Naive thymus-derived CD4-positive, alpha-beta T cell (primary cell): ENCODE measurements at regions of chr12 and their contacts with region 1.

Region 1: GRCh38 chr12:8687846-8688601 is 9.8 kb upstream of the RIMKLB start:
- DNase-seq: peak in 4 of 9 donors; percentile 14 to 16 (median 14)
- ATAC-seq: peak; percentile 55
- H3K4me3 ChIP-seq: no peak overlapping the region
- H3K4me3 Mint-ChIP-seq: no peak overlapping the region
- H3K27ac ChIP-seq: no peak overlapping the region
- H3K27ac Mint-ChIP-seq: no peak overlapping the region
- H3K4me1 ChIP-seq: peaks cover 0 to 8% of the 10 kb centered on the region in 2 donors
- H3K4me1 Mint-ChIP-seq: peaks cover 0 to 15% (median 10%) of the 10 kb centered on the region in 7 donors
- H3K27me3 ChIP-seq: no peaks in the 10 kb centered on the region
- H3K27me3 Mint-ChIP-seq: peaks cover 0 to 38% (median 0%) of the 10 kb centered on the region in 5 donors

Region 2: DNA sequence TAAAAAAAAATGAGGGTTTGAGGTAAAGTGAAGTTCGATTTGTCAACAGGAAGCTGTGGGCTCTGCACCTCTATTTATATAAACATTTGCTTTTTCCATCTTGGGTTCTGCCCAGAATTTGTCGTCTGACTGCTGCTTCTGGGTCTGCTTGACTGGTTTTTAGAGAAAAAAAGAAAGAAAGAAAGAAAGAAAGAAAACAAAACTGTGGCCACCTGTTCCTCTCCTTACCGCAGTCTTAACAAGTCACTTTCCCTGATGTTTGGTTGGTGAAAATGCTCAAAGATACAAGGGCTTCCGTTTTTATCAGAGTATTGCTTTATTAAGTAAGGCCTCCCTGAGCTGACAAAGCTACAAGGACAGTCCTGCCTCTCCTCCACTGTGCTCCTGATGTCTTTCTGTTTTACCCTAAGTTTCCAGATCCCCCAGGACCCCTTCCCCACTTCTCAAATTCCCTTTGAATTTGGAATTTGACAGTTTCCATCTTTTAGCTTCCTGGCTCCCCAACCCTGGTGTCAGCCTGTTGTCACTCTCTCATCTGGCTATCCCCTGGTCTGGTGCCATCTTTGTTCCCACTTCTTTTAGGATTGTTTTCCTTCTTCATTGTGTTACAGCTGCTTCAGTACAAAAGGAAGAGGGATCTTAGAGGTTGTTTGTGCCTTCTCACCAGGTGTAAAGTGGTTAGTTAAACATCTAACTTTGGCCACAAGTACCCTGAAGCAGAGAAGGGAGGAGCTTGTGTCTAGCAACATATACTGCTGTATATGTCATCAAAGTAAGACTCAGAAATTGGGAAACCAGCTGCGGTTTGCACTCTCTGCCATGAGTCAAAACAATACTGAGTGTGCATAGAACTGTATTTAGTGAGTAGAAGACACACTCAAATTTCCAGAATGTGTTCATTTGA is 43.4 kb before region 1 on chr12:
- CTCF ChIA-PET with region 1: no interaction called
- POLR2A ChIA-PET with region 1: no interaction called
- intact Hi-C with region 1: no loop called
- DNase-seq: peak in 7 of 9 donors; percentile 11 to 51 (median 31)
- ATAC-seq: peak; percentile 84
- H3K4me3 ChIP-seq: peak overlapping the region; percentile 34
- H3K4me3 Mint-ChIP-seq: peak overlapping the region; percentile 49 to 88 (median 74)
- H3K27ac ChIP-seq: peak overlapping the region; percentile 61
- H3K27ac Mint-ChIP-seq: peak overlapping the region; percentile 90 to 95 (median 94)
- H3K4me1 ChIP-seq: peaks cover 22 to 33% of the 10 kb centered on the region in 2 donors
- H3K4me1 Mint-ChIP-seq: peaks cover 15 to 45% (median 26%) of the 10 kb centered on the region in 7 donors
- H3K27me3 ChIP-seq: no peaks in the 10 kb centered on the region
- H3K27me3 Mint-ChIP-seq: peaks cover 0 to 67% (median 0%) of the 10 kb centered on the region in 5 donors

Region 3: GRCh38 chr12:8780389-8780788 is 92.4 kb after region 1 on chr12:
- CTCF ChIA-PET with region 1: no interaction called
- POLR2A ChIA-PET with region 1: no interaction called
- intact Hi-C with region 1: loop called in 1 of 2 experiments (anchors 2 kb)
- DNase-seq: peak in 2 of 9 donors; percentile 7 to 12
- ATAC-seq: no peak
- H3K4me3 ChIP-seq: no peak overlapping the region
- H3K4me3 Mint-ChIP-seq: no peak overlapping the region
- H3K27ac ChIP-seq: no peak overlapping the region
- H3K27ac Mint-ChIP-seq: no peak overlapping the region
- H3K4me1 ChIP-seq: no peaks in the 10 kb centered on the region
- H3K4me1 Mint-ChIP-seq: no peaks in the 10 kb centered on the region
- H3K27me3 ChIP-seq: no peaks in the 10 kb centered on the region
- H3K27me3 Mint-ChIP-seq: peaks cover 0 to 5% (median 0%) of the 10 kb centered on the region in 5 donors